Adrenal gland (tissue), 19 donors: ENCODE measurements at regions of chr1 and their contacts with region 1.

Region 1: DNA sequence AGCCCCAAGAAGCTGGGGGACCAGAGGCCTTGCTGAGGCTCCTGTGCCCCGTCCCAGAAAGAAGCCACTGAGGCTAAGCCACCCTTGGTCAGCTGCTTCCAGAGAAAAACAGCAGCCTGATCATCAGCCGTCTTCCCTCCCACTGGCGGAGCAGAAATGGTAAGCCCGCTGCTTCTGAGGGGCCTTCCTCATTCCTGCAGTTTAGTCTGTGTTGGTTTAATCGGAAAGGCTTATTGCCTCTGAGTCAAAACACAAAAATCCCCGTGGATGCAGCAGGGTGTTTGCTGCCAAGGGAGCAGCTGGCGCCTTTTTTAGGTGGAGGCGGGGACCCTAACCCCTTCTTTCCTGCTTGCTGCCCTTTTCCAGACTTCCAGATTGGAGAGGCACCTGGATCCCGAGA is 33.9 kb downstream of the SPSB1 start:
- DNase-seq: no peak
- H3K4me3 ChIP-seq: no peak overlapping the region
- H3K27ac ChIP-seq: peak overlapping the region in 2 of 5 donors; percentile 38 to 47
- H3K4me1 ChIP-seq: peaks cover 0 to 15% of the 10 kb centered on the region in 2 donors
- H3K27me3 ChIP-seq: no peaks in the 10 kb centered on the region
- CTCF ChIP-seq: no peak
- POLR2A ChIP-seq: no peak

Region 2: GRCh38 chr1:9196129-9197040 is 130.2 kb before region 1 on chr1:
- intact Hi-C with region 1: no loop called
- DNase-seq: peak; percentile 74 to 93 (median 86)
- H3K4me3 ChIP-seq: peak overlapping the region in 1 of 4 donors; percentile 33
- H3K27ac ChIP-seq: peak overlapping the region; percentile 66 to 95 (median 89)
- H3K4me1 ChIP-seq: peaks cover 34% of the 10 kb centered on the region in 2 donors
- H3K27me3 ChIP-seq: peaks cover 8% of the 10 kb centered on the region
- CTCF ChIP-seq: peak; percentile 45 to 84 (median 71)
- POLR2A ChIP-seq: peak in 1 of 2 donors; percentile 32

Region 3: GRCh38 chr1:9371391-9371935 is 44.9 kb after region 1 on chr1:
- intact Hi-C with region 1: loop called in 1 of 2 experiments (anchors 5 kb)
- DNase-seq: peak in 3 of 7 donors; percentile 26 to 68 (median 54)
- H3K4me3 ChIP-seq: no peak overlapping the region
- H3K27ac ChIP-seq: peak overlapping the region in 1 of 5 donors; percentile 74
- H3K4me1 ChIP-seq: peaks cover 0 to 10% of the 10 kb centered on the region in 2 donors
- H3K27me3 ChIP-seq: no peaks in the 10 kb centered on the region
- CTCF ChIP-seq: no peak
- POLR2A ChIP-seq: no peak